AG04449 (cell line): ENCODE measurements at regions of chr4 and their contacts with region 1.

Region 1: DNA sequence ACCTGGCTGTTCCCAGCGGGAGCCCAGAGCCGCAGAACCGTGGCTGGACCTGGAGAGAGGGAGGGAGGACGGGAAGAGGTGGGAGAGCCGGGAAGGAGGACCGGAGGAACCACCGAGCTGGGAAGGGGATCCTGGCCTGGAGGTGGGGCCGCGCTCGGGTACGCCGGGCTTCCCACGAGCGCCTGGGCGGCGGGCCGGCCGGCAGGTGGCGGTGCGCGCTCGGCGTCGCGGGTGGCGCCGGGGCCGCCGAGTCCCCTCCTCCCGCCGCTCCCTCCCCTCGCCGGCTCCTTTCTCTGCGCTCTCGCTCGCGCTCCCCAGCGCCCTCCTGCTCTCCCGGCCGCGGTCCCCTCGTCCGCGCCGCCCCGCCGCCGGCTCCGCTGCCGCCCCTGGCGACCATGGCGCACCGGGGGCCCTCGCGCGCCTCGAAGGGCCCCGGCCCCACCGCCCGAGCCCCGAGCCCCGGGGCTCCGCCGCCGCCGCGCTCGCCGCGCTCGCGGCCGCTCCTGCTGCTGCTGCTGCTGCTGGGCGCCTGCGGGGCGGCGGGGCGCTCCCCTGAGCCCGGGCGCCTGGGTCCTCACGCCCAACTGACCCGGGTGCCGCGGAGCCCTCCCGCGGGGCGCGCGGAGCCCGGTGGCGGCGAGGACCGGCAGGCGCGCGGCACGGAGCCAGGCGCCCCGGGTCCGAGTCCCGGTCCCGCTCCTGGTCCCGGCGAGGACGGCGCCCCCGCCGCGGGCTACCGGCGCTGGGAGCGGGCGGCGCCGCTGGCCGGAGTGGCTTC is at the start of gene SORCS2:
- DNase-seq: no peak
- H3K4me3 ChIP-seq: peak within 1 kb of the TSS; percentile 51
- CTCF ChIP-seq: peak; percentile 44

Region 2: GRCh38 chr4:6640292-6641163 is 551.9 kb before region 1 on chr4 and contains the start of gene MRFAP1:
- CTCF ChIA-PET with region 1: no interaction called
- POLR2A ChIA-PET with region 1: no interaction called
- DNase-seq: peak; percentile 71
- H3K4me3 ChIP-seq: peak within 1 kb of the TSS; percentile 96
- CTCF ChIP-seq: no peak

Region 3: GRCh38 chr4:7206911-7207567 is 14.6 kb after region 1 on chr4:
- CTCF ChIA-PET with region 1: interaction called, 62 read pairs
- POLR2A ChIA-PET with region 1: interaction called, 3 read pairs
- DNase-seq: peak; percentile 50
- H3K4me3 ChIP-seq: no peak overlapping the region; the same call in 1 of the 2 replicates
- CTCF ChIP-seq: no peak

Region 4: DNA sequence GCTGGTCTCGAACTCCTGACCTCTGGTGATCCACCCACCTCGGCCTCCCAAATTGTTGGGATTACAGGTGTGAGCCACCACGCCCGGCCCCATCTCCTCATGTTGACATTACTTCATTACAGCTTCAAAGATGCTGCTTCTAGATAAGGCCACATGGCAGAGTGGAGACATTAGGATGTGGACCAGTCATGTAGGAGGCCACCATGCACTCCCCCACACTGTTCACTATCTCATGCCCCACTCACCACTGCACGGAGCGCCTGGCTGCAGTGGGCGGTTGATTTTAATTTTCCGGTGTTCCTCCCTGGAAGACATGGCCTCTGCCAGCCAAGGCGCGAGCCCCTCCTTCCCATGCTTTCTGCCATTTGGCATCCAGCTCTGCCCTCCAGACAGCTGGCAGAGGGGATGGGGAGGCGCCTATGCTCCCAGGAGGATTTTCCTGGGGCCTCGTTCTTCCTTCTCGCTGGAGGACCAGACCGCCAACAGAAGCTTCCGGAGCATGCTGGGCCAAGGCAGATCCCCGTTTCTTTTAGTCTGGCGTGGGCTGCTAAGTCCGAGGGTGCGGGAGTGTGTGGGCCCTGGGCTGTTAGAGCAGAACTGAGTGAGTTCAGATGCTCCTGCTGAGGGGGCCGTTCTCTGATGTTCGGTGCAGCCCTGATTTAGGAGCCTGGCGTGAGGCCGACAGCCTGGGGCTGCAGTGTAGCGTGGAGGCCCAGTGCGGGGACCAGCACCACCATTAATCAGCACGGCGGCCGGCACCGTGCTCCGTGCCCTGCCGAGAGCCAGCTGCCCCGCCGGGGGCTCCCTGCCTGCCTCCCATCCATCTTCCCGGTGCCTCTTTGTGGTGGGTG is 93.0 kb after region 1 on chr4:
- CTCF ChIA-PET with region 1: interaction called, 12 read pairs
- POLR2A ChIA-PET with region 1: no interaction called
- DNase-seq: no peak
- H3K4me3 ChIP-seq: no peak overlapping the region
- CTCF ChIP-seq: no peak

Region 5: DNA sequence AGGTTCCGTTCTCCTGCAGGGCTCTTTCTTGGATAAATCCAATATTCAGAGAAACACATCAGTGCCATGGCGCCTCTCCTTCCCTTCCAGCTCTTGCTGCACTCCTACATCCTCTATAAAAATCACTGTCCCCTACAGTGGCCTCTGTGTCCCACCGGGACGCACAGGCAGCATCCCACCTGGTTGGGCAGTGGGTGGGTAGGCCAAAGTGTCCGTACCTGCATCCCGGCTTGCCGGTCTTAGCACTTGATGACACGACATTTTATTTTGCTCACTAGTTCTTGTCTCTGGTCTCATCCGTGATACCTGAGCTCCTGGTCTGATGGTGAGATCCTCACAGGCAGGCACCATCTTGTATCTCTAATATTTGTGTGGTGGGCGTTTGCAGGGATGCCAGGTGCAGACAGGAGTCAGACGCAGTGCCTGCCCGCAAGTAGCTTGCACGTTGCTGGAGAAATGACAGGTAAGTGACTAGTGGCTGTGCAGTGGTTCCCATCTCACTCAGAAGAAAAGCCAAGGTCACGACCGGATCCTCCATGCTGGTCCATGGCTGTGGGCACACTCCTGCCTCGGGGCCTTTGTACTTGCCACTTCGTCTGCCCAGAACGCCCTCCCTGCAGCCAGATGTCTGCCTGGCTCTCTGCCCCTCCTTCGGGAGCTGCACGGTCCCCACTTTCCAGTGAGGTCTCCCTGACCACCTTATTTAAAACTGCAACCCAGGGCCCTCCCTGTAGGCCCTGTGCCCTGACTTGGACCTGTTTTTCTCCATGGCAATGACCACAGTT is 109.6 kb after region 1 on chr4:
- CTCF ChIA-PET with region 1: interaction called, 156 read pairs
- POLR2A ChIA-PET with region 1: no interaction called
- DNase-seq: no peak
- H3K4me3 ChIP-seq: no peak overlapping the region
- CTCF ChIP-seq: no peak

Region 6: DNA sequence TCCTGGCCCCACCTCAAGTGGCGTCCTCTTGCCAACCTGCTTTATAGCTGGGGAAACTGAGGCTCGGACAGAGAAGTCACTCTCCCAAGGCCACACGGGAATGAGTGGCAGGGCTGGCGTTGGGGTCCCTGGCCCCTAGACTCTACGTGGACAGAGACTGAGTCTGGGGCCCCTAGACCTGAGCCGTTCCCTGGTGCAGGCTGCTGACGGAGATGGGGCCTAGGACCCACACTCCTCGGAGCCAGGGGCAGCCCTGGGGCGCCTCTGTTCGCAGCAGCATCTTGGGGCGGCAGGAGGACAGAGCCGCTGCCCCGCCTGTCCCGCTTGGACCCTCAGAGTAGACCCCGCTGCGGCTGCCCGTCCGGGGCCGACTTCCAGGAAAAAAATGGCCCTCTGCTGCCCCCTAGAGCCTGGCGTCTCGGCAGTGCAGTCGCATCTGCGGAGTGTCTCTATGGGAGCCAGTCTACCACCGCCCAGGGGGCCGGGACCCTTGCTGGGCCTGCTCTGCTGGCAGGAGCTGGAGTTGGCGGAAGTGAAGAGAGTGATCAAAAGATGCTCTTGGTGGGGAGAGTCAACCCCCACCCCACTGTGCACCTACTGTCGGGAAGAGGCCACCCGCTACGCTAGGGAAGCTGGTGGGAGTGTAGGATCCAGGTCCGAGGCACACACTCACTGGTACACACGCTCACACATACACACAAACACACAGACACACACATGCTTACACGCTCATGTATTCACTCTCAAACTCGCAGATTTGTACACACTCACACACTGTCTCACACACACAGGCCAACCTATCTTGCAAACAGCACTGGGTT is 527.1 kb after region 1 on chr4:
- CTCF ChIA-PET with region 1: interaction called, 41 read pairs
- POLR2A ChIA-PET with region 1: no interaction called
- DNase-seq: no peak
- H3K4me3 ChIP-seq: no peak overlapping the region
- CTCF ChIP-seq: peak; percentile 88